Naive thymus-derived CD4-positive, alpha-beta T cell (primary cell): ENCODE measurements at regions of chr17 and their contacts with region 1.

Region 1: GRCh38 chr17:21214015-21214776 is at the start of gene TMEM11:
- DNase-seq: peak; percentile 91 to 97 (median 95)
- ATAC-seq: peak; percentile 96
- H3K4me3 ChIP-seq: peak within 1 kb of the TSS; percentile 93
- H3K4me3 Mint-ChIP-seq: peak within 1 kb of the TSS; percentile 90 to 97 (median 92)
- H3K27ac ChIP-seq: peak within 1 kb of the TSS; percentile 97
- H3K27ac Mint-ChIP-seq: peak within 1 kb of the TSS; percentile 84 to 96 (median 92)
- H3K4me1 ChIP-seq: peaks cover 25 to 32% of the 10 kb centered on the region in 2 donors
- H3K4me1 Mint-ChIP-seq: peaks cover 43 to 74% (median 53%) of the 10 kb centered on the region in 7 donors
- H3K27me3 ChIP-seq: no peaks in the 10 kb centered on the region
- H3K27me3 Mint-ChIP-seq: no peaks in the 10 kb centered on the region
- total RNA-seq, gene TMEM11: 11.7 to 22.9 (median 19.3) TPM

Region 2: DNA sequence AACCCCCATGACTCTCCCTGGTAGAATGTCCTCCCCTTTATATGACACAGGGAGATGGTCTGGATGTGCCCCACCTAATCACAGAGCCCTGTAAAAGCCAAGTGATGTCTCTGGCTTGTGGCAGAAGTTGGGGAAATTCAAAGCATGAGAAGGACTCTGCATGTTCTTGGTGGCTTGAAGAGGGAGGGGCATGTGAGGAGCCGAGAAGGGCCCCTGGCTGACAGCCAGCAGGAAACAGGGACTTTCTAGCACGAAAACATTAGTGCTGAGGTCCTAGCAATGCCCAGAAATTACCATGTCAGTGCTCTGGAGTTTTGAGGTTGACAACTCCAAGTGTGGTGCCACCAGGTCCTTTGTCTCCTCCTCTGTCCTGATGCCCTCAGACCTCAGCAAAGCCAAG is 247.3 kb before region 1 on chr17:
- CTCF ChIA-PET with region 1: no interaction called
- POLR2A ChIA-PET with region 1: no interaction called
- intact Hi-C with region 1: no loop called
- DNase-seq: peak in 3 of 9 donors; percentile 7 to 27 (median 9)
- ATAC-seq: peak; percentile 42
- H3K4me3 ChIP-seq: no peak overlapping the region
- H3K4me3 Mint-ChIP-seq: no peak overlapping the region
- H3K27ac ChIP-seq: no peak overlapping the region
- H3K27ac Mint-ChIP-seq: peak overlapping the region in 1 of 9 donors; percentile 69
- H3K4me1 ChIP-seq: peaks cover 0 to 4% of the 10 kb centered on the region in 2 donors
- H3K4me1 Mint-ChIP-seq: peaks cover 6 to 15% (median 10%) of the 10 kb centered on the region in 7 donors
- H3K27me3 ChIP-seq: no peaks in the 10 kb centered on the region
- H3K27me3 Mint-ChIP-seq: peaks cover 0 to 17% (median 10%) of the 10 kb centered on the region in 5 donors

Region 3: DNA sequence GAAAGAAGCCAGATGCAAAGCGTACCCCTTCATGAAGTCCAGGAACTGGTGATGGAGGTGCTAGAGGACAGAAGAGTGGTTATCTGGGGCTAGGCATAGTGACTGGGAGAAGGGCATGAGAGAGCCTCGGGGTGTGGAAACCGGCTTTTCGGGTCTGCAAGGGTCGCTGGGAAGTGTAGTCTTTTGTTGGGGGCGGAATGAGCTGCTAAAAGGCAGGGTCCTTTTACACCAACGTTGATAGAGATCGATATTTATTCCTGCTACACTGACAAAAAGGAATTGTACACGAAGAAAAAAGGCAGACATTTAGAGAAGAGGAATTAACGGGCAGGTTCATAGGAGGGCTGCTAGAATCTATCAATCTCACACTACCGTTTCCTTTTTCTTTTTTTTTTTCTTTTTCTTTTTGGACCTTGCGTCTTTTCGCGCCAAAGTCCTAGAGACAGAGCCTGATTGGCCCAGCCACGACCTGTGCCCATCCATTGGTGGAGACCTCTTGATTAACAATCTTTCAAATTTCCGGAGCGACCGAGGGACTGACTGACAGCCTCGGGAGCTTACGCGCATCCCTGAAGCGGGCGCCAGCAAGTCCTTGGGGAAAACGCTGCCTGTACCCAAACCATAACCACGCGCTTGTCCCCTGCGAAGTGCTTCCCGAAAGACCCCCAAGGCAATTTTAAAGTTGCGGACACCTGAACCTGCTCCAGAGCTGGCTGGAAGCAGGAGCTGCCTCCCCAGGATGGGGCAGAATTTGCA is 115.1 kb before region 1 on chr17:
- CTCF ChIA-PET with region 1: no interaction called
- POLR2A ChIA-PET with region 1: no interaction called
- intact Hi-C with region 1: loop called in 1 of 2 experiments (anchors 1 kb)
- DNase-seq: peak; percentile 16 to 76 (median 67)
- ATAC-seq: peak; percentile 96
- H3K4me3 ChIP-seq: peak overlapping the region; percentile 70
- H3K4me3 Mint-ChIP-seq: peak overlapping the region; percentile 86 to 96 (median 90)
- H3K27ac ChIP-seq: no peak overlapping the region
- H3K27ac Mint-ChIP-seq: peak overlapping the region in 7 of 9 donors; percentile 3 to 94 (median 31)
- H3K4me1 ChIP-seq: peaks cover 0 to 4% of the 10 kb centered on the region in 2 donors
- H3K4me1 Mint-ChIP-seq: peaks cover 11 to 24% (median 16%) of the 10 kb centered on the region in 7 donors
- H3K27me3 ChIP-seq: no peaks in the 10 kb centered on the region
- H3K27me3 Mint-ChIP-seq: no peaks in the 10 kb centered on the region

Region 4: GRCh38 chr17:21228104-21228503 is 13.9 kb after region 1 on chr17:
- CTCF ChIA-PET with region 1: no interaction called
- POLR2A ChIA-PET with region 1: no interaction called
- intact Hi-C with region 1: no loop called
- DNase-seq: no peak
- ATAC-seq: no peak
- H3K4me3 ChIP-seq: no peak overlapping the region
- H3K4me3 Mint-ChIP-seq: no peak overlapping the region
- H3K27ac ChIP-seq: no peak overlapping the region
- H3K27ac Mint-ChIP-seq: peak overlapping the region in 1 of 9 donors; percentile 90
- H3K4me1 ChIP-seq: no peaks in the 10 kb centered on the region
- H3K4me1 Mint-ChIP-seq: peaks cover 0 to 3% (median 0%) of the 10 kb centered on the region in 7 donors
- H3K27me3 ChIP-seq: no peaks in the 10 kb centered on the region
- H3K27me3 Mint-ChIP-seq: no peaks in the 10 kb centered on the region

Region 5: GRCh38 chr17:21252796-21253645 is 38.8 kb after region 1 on chr17 and contains the start of gene NATD1:
- CTCF ChIA-PET with region 1: no interaction called
- POLR2A ChIA-PET with region 1: interaction called, 9 read pairs
- intact Hi-C with region 1: loop called (anchors 1 kb)
- DNase-seq: peak; percentile 60 to 82 (median 75)
- ATAC-seq: peak; percentile 90
- H3K4me3 ChIP-seq: peak within 1 kb of the TSS; percentile 73
- H3K4me3 Mint-ChIP-seq: peak within 1 kb of the TSS; percentile 78 to 97 (median 88)
- H3K27ac ChIP-seq: peak within 1 kb of the TSS; percentile 77
- H3K27ac Mint-ChIP-seq: peak within 1 kb of the TSS; percentile 66 to 97 (median 93)
- H3K4me1 ChIP-seq: peaks cover 7 to 12% of the 10 kb centered on the region in 2 donors
- H3K4me1 Mint-ChIP-seq: peaks cover 19 to 43% (median 39%) of the 10 kb centered on the region in 7 donors
- H3K27me3 ChIP-seq: no peaks in the 10 kb centered on the region
- H3K27me3 Mint-ChIP-seq: peaks cover 0 to 35% (median 0%) of the 10 kb centered on the region in 5 donors
- total RNA-seq, gene NATD1: 2.5 to 11.1 (median 8.9) TPM

Region 6: GRCh38 chr17:21284319-21285163 is 70.3 kb after region 1 on chr17 and contains the start of gene MAP2K3:
- CTCF ChIA-PET with region 1: interaction called, 3 read pairs
- POLR2A ChIA-PET with region 1: interaction called, 6 read pairs
- intact Hi-C with region 1: loop called (anchors 1 kb)
- DNase-seq: peak; percentile 79 to 98 (median 84)
- ATAC-seq: peak; percentile 78
- H3K4me3 ChIP-seq: peak within 1 kb of the TSS; percentile 90
- H3K4me3 Mint-ChIP-seq: peak within 1 kb of the TSS; percentile 88 to 99 (median 96)
- H3K27ac ChIP-seq: peak within 1 kb of the TSS; percentile 78
- H3K27ac Mint-ChIP-seq: peak within 1 kb of the TSS; percentile 88 to 97 (median 96)
- H3K4me1 ChIP-seq: peaks cover 39 to 40% of the 10 kb centered on the region in 2 donors
- H3K4me1 Mint-ChIP-seq: peaks cover 32 to 57% (median 52%) of the 10 kb centered on the region in 7 donors
- H3K27me3 ChIP-seq: no peaks in the 10 kb centered on the region
- H3K27me3 Mint-ChIP-seq: no peaks in the 10 kb centered on the region
- total RNA-seq, gene MAP2K3: 37.5 to 127 (median 39.2) TPM

Region 7: GRCh38 chr17:21551081-21551881 is 337.1 kb after region 1 on chr17:
- CTCF ChIA-PET with region 1: no interaction called
- POLR2A ChIA-PET with region 1: no interaction called
- intact Hi-C with region 1: loop called in 1 of 2 experiments (anchors 1 kb)
- DNase-seq: peak; percentile 68 to 89 (median 80)
- ATAC-seq: peak; percentile 96
- H3K4me3 ChIP-seq: peak overlapping the region; percentile 69
- H3K4me3 Mint-ChIP-seq: peak overlapping the region; percentile 78 to 91 (median 88)
- H3K27ac ChIP-seq: peak overlapping the region; percentile 69
- H3K27ac Mint-ChIP-seq: peak overlapping the region in 6 of 9 donors; percentile 16 to 66 (median 46)
- H3K4me1 ChIP-seq: peaks cover 0 to 10% of the 10 kb centered on the region in 2 donors
- H3K4me1 Mint-ChIP-seq: peaks cover 24 to 53% (median 41%) of the 10 kb centered on the region in 7 donors
- H3K27me3 ChIP-seq: no peaks in the 10 kb centered on the region
- H3K27me3 Mint-ChIP-seq: peaks cover 17 to 31% (median 27%) of the 10 kb centered on the region in 5 donors